Activated CD8-positive, alpha-beta T cell treated with anti-CD3 and anti-CD28 coated beads, Interleukin-2, amount 10 ng/mL, durations not matched to agents 7 days and 5 days (primary cell): ENCODE measurements at regions of chr2 and their contacts with region 1.

Region 1: DNA sequence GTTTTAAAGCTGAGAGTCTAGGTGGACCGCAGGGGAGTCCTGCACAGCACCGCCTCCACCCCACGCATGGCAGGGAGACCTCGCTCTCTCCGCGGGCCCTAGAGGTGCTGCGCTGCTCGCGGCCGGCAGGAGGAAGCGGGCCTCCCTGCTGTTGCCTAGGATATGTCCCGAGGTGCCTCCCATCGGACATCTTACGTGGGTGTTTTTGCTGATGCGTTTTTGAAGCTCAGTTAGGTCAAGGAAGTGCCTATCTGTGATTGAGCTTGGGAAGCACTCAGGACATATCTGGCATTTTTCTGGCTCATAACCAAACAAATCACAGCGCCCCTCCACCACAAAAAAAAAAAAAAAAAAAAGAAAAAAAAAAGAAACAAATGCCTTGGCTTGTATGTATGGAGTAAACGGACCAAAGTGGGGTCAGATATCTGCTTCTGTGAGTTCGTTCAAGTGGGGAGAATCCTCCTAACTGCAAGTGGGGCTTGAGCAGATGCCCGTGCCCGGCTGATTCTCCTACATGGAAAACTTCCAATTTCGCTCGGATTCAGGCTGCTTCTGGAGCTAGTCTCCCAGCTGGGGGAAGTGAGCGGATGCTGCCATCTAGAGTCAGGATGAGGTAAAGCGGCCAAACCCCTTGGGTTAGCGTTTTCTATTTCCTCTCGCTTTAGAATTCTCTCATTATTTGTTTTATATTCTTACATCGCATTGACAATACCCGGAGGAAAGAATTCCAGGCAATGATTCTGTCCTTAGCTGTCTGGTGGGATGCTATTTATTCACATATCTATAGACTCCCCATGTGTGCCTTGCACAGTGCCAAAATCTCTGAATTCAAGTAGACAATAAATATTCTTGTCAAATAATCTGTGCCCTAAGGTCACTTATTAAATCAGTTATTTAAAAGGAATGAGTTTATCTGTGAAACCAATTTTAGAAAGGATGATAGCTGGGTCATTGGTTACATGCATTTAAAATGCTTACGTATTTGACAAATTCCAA is 95.3 kb downstream of the CD8B2 start:
- DNase-seq: peak; percentile 68
- ATAC-seq: peak; percentile 96
- H3K4me3 Mint-ChIP-seq: peak overlapping the region; percentile 80
- H3K27ac Mint-ChIP-seq: peak overlapping the region; percentile 51
- H3K4me1 Mint-ChIP-seq: peaks cover 12% of the 10 kb centered on the region
- H3K27me3 Mint-ChIP-seq: peaks cover 32% of the 10 kb centered on the region

Region 2: DNA sequence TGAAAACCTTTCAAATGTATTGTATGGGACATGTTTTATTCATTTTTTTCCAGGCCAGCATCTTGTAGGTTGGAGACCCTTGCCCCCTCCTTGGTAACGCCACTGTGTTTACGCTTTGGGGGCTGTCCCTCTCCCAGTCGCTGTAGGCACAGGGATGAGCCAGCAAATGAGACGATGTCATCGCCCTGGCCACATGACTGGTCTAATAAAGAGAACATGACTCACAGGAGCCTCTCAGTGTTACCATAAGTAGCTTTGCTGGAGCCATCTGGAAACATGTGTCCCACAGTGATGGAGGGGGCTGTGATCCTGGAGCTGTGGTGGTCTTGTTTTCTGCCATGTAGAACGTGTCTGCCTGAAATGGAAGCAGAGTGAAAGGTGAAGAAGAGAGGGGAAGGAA is 16.4 kb before region 1 on chr2:
- CTCF ChIA-PET with region 1: interaction called, 11 read pairs
- POLR2A ChIA-PET with region 1: no interaction called
- DNase-seq: no peak
- ATAC-seq: no peak
- H3K4me3 Mint-ChIP-seq: no peak overlapping the region
- H3K27ac Mint-ChIP-seq: no peak overlapping the region
- H3K4me1 Mint-ChIP-seq: no peaks in the 10 kb centered on the region
- H3K27me3 Mint-ChIP-seq: peaks cover 6% of the 10 kb centered on the region

Region 3: DNA sequence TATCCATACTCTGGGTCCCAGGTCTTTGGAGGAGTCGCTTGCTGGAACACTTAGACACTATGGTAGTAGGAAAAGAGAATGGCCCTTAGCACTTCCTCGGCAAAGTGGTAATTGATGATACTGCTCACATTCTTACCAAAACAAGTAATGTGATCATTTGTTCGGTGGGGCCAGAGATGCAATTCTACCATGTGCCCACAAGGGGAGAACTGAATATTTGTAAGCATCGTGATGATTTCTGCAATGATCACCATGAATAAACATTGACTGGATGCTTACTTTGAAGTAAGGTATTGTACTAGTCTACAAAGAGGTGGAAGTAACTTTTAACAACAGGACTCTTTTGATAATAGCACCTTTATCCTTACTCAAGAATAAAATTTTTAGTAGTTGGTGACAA is 14.4 kb after region 1 on chr2:
- CTCF ChIA-PET with region 1: interaction called, 16 read pairs
- POLR2A ChIA-PET with region 1: no interaction called
- DNase-seq: no peak
- ATAC-seq: no peak
- H3K4me3 Mint-ChIP-seq: no peak overlapping the region
- H3K27ac Mint-ChIP-seq: no peak overlapping the region
- H3K4me1 Mint-ChIP-seq: no peaks in the 10 kb centered on the region
- H3K27me3 Mint-ChIP-seq: peaks cover 19% of the 10 kb centered on the region

Region 4: GRCh38 chr2:106685180-106685900 is 102.9 kb after region 1 on chr2:
- CTCF ChIA-PET with region 1: no interaction called
- POLR2A ChIA-PET with region 1: no interaction called
- DNase-seq: no peak
- ATAC-seq: no peak
- H3K4me3 Mint-ChIP-seq: no peak overlapping the region
- H3K27ac Mint-ChIP-seq: no peak overlapping the region
- H3K4me1 Mint-ChIP-seq: no peaks in the 10 kb centered on the region
- H3K27me3 Mint-ChIP-seq: peaks cover 2% of the 10 kb centered on the region